Posterior cingulate gyrus (tissue), 11 donors: ENCODE measurements at regions of chr3 and their contacts with region 1.

Region 1: GRCh38 chr3:72818092-72818773 is 30.0 kb downstream of the SHQ1 start:
- DNase-seq: peak in 1 of 10 donors; percentile 19

Region 2: DNA sequence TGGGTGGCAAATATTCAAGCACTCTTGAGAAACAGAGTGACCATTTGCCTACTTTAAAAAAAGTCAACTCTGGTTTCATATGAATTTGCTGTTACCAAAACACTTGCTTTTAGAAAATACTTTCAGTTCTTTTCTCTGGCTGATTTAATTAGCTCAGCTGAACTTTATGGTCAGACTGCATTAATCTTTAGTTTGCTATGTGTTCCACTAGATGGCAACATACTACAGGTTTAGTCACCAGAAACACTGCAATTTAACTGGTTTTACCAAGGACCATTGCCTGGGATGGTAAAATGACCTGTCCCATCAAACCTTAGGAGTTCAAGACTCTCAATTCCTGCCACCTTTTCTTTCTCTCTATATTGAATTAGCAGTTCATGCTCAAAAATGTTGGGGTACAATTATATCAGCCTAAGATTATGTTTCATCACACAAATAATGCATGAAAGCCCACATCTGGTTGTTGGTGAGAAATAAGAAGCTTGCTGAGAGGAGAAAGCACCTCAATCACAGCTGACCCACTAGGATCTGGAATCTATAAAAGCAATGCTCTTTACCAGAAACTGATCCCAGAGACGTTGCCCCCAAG is 1107.2 kb before region 1 on chr3:
- intact Hi-C with region 1: loop called (anchors 2 kb)
- DNase-seq: no peak

Region 3: DNA sequence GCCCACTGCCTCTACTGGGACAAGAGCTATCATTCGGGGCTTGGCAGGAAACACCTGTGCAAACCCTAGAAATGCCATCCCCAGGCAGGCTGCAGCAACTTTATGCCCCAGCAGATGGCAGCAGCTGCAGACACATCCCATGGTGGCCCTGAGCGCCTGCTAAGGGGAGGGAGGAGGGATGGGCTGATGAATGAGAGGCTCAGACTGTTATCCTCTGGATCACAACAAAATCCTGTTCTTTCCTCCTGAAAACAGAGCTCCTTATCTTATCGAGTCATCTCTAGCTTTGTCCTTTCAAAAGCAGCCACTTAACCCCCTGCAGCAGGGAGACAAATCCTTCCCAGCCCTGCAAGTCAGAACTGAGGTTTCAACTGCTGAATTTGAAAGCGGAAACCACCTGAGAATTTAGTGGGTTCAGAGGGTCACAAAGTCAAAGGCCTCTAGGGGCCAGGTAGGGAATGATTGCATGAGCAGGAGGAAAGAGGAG is 942.7 kb before region 1 on chr3:
- intact Hi-C with region 1: loop called (anchors 1 kb)
- DNase-seq: peak; percentile 72 to 97 (median 84)

Region 4: GRCh38 chr3:72447059-72447946 is 370.9 kb before region 1 on chr3:
- intact Hi-C with region 1: loop called (anchors 1 kb)
- DNase-seq: peak; percentile 83 to 99 (median 88)

Region 5: DNA sequence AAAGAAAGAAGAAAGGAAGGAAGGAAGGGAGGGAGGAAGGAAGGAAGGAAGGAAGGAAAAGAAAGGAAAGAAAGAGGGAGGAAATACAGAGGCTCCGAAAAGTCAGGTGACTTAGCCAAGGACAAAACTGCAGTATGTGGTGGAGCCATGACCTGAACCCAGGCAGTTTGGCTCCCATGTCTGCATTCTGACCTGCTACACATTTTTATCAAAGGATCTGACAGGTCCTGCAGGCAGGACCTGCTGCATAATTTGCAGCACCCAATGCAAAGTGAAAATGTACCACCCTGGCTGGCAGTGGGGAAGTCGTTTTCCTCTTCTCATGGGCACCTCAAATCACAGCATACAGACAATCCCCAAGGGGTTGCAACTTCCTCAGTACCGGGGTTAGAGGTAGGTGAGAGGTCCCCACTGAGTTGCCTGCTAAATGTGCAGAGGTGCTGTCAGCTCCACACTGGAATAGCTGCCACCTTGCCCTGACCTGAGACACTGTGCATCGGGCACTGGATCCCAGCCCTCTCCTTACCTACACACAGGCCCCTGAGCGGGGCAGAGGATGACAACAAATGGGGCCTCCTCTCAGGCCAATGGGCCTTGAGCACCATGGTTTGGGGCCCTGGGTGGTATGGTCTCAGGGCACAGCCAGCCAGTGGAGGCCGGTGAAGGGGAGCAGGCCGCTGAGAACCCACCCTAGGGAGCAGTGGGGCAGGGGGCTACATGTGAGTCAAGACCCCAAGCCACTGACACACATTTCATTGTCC is 145.0 kb before region 1 on chr3:
- intact Hi-C with region 1: loop called (anchors 5 kb)
- DNase-seq: no peak